ENCODE measurements at regions of chr1 and their contacts with region 1.

Region 1: GRCh38 chr1:63691701-63692425 is 82.0 kb upstream of the ROR1 start:
- DNase-seq: peak in 1 of 3 donors; percentile 50
- ATAC-seq: peak; percentile 91 to 97 (median 95)
- H3K4me3 ChIP-seq: no peak overlapping the region
- H3K27ac ChIP-seq: no peak overlapping the region
- H3K4me1 ChIP-seq: no peaks in the 10 kb centered on the region
- H3K27me3 ChIP-seq: no peaks in the 10 kb centered on the region
- CTCF ChIP-seq: peak; percentile 68 to 81 (median 74)
- POLR2A ChIP-seq: no peak

Region 2: DNA sequence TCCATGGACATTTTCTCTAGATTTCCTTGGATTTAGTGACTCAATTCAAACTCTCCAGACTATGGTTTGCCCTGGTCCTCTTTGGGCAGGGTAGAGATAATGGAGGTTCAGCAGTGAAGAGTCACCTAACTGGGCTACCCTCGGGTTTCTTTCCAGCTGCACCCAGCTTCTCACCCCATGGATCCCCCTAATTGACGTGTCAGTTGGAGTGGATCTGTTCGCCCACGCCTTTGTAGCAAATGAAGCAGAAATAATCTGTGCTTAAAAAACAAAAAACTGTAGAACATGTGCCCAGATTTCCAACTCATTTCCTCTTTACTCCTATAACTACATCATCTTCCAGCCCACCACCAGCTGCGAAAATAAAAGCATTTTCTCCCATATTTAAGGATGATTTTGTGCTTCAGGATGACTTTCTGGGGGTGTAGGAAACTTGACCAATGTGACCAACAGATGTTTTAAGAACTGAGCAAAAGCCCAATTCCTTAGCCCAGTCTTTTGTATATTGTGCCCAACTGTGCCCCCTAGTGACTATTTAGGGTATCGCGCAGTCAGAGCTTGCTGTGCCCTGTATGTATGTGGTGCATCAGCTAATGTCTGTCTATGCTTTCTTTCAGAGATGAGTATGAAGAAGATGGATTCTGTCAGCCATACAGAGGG is 445.0 kb after region 1 on chr1:
- intact Hi-C with region 1: loop called in 1 of 2 experiments (anchors 10 kb)
- DNase-seq: peak; percentile 41 to 66 (median 57)
- ATAC-seq: peak; percentile 89 to 96 (median 93)
- H3K4me3 ChIP-seq: no peak overlapping the region
- H3K27ac ChIP-seq: no peak overlapping the region
- H3K4me1 ChIP-seq: no peaks in the 10 kb centered on the region
- H3K27me3 ChIP-seq: no peaks in the 10 kb centered on the region
- CTCF ChIP-seq: peak; percentile 81 to 93 (median 90)
- POLR2A ChIP-seq: no peak

Region 3: GRCh38 chr1:64194168-64195080 is 502.6 kb after region 1 on chr1:
- intact Hi-C with region 1: no loop called
- DNase-seq: no peak
- ATAC-seq: no peak
- H3K4me3 ChIP-seq: no peak overlapping the region
- H3K27ac ChIP-seq: no peak overlapping the region
- H3K4me1 ChIP-seq: no peaks in the 10 kb centered on the region
- H3K27me3 ChIP-seq: no peaks in the 10 kb centered on the region
- CTCF ChIP-seq: no peak
- POLR2A ChIP-seq: no peak

Measured in right lobe of liver (tissue), 6 donors.